Prostate gland (tissue), 2 donors: ENCODE measurements at regions of chr11 and their contacts with region 1.

Region 1: DNA sequence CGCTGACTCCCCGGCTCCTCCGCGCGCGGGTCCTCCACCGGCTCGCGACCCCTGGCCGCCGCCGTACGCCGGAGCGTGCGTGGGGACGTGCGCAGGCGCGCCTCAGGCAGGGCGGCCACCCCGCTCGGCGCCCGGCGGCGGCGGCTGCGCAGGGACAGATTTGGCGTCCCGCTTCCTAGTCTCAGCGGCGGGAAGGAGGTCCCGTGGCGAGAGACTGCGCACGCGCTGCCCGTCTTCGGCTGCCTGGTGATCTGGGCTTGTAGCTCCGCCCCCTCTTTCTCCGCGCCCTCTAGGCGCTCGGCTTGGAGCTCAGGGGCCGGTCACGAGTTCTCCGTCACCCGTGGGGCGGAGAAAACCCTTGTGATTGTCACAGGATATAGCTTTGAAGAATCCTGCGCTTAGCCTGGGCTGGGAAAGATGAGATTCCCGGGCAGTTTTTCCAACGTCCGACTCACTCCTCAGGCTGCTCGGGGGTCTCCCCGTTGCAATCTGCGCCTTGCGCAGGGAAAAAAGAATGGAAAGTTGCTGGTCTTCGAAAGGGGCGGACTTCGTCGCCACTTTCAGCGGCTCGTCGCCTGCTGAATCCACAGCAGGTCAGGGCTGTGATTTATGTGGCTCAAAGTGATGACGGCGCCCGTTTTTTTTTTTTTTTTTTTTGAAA is at the start of gene PATL1:
- DNase-seq: peak; percentile 99
- H3K4me3 ChIP-seq: peak within 1 kb of the TSS; percentile 68 to 83
- H3K27ac ChIP-seq: peak within 1 kb of the TSS; percentile 92 to 97
- H3K4me1 ChIP-seq: peaks cover 8% of the 10 kb centered on the region
- H3K27me3 ChIP-seq: no peaks in the 10 kb centered on the region
- CTCF ChIP-seq: peak in 1 of 4 experiments; percentile 3
- POLR2A ChIP-seq: peak; percentile 95
- total RNA-seq, gene PATL1: 10.3 to 26.2 TPM

Region 2: GRCh38 chr11:59615637-59616395 is 53.3 kb before region 1 on chr11 and contains the start of gene OSBP:
- intact Hi-C with region 1: loop called (anchors 1 kb)
- DNase-seq: peak; percentile 100
- H3K4me3 ChIP-seq: peak within 1 kb of the TSS; percentile 60 to 84
- H3K27ac ChIP-seq: peak within 1 kb of the TSS; percentile 91 to 95
- H3K4me1 ChIP-seq: peaks cover 8% of the 10 kb centered on the region
- H3K27me3 ChIP-seq: no peaks in the 10 kb centered on the region
- CTCF ChIP-seq: no peak
- POLR2A ChIP-seq: peak; percentile 75
- total RNA-seq, gene OSBP: 46.1 to 49.0 TPM

Region 3: GRCh38 chr11:59802639-59803176 is 133.6 kb after region 1 on chr11:
- intact Hi-C with region 1: loop called (anchors 10 kb)
- DNase-seq: peak; percentile 47
- H3K4me3 ChIP-seq: no peak overlapping the region
- H3K27ac ChIP-seq: no peak overlapping the region
- H3K4me1 ChIP-seq: no peaks in the 10 kb centered on the region
- H3K27me3 ChIP-seq: no peaks in the 10 kb centered on the region
- CTCF ChIP-seq: peak in 3 of 4 experiments; percentile 74 to 81 (median 80)
- POLR2A ChIP-seq: no peak